ENCODE measurements at regions of chrX and their contacts with region 1.

Region 1: GRCh38 chrX:136920001-136920400 is 39.5 kb upstream of the RBMX start:
- DNase-seq: no peak

Region 2: DNA sequence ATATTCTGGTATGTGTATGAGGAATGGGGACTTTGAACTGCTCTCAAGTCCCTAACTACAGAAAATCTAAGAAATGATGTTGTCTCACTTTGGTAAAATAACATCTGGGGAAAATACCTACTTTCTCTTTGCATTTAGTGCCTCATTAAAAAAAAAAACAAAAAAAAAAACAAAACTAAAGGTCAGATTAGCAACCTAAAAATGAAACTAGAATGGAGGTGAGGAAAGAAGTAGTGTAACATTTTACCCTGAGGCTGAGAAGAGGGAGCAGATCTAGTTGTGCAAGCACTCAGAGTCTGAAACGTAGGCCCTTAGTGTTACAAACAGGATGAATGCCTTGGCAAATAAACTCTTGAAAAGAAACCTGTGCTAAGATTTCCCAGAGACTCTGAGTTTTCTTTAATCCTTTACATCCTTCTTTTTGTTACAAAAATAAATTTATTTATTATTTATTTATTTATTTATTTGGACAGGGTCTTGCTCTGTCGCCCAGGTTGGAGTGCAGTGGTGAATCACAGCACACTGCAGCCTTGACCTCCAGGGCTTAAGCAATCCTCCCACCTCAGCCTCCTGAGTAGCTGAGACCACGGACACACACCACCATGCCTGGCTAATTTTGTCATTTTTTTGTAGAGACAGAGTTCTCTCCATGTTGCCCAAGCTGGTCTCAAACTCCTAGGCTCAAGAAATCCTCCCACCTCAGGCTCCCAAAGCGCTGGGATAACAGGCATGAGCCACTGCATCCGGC is 331.8 kb before region 1 on chrX:
- intact Hi-C with region 1: no loop called
- DNase-seq: no peak

Region 3: DNA sequence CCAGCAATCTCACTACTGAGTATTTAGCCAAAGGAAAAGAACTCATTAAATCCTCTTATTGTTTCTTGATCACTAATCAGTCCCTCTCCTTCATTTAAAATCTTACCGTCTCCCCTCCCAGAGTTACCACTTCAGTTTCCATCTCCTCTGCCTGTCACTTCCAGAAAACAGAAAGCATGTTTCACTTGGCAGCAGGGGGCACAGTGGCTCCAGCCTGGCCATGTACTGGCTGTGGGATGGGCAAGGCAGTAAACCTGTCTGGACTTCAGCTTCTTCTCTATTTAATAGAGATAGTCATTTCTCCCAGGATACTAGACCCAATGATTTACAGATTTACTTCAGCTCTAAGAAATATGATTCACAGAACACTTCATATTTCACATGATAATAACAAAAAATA is 208.9 kb before region 1 on chrX:
- intact Hi-C with region 1: loop called in 1 of 2 experiments (anchors 10 kb)
- DNase-seq: no peak